ENCODE measurements at regions of chr19 and their contacts with region 1.

Region 1: DNA sequence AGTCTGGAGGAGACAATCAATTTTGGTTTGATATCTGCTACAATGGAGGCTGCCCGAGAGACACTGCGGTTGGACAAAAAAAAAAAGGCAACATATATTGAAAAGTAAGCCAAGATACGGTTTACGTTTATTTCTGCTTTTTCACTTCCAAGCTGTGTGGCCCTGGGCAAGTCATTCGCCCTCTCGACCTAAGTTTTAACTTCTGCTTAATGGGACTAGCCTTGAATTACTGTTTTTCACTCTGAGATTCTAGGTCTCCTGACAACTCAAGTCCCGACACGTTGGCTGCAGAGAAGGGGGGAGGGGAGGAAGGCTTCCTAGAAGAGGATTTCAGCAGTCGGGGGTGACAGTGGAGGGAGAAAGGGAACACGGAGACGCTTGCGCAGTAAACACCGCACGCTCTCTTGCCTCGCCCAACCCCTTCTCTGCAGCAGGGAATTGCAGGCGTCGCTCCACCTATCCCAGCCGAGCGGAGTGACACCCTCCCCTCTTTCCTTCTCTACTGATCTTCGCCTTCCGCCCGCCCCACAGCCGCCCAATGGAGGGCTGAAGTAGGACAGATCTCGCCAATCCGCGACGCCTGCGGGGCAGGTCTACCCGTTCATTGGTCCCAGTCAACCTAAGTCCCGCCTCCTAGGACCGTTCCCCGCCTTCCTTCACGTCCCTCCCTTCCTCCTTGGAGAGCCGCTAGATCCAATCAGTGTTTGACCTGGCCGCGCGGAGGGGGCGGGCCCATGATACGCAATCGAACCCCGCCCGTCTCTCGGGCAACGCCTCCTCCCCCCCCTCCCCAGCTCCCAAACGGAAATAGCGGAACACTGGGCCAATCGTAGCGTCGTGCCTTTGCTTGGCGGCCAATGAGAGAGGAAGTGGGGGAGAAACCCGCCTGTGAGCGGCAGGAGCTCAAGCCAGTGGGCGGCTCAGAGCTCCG is 529 bp upstream of the AP2A1 start:
- DNase-seq: peak; percentile 97 to 100 (median 99)
- ATAC-seq: peak; percentile 87
- H3K4me3 ChIP-seq: peak overlapping the region; percentile 62 to 76
- H3K4me3 Mint-ChIP-seq: peak overlapping the region; percentile 82
- H3K27ac ChIP-seq: peak overlapping the region; percentile 66 to 87
- H3K27ac Mint-ChIP-seq: peak overlapping the region; percentile 93
- H3K4me1 ChIP-seq: peaks cover 24% of the 10 kb centered on the region
- H3K4me1 Mint-ChIP-seq: peaks cover 38% of the 10 kb centered on the region
- H3K27me3 ChIP-seq: no peaks in the 10 kb centered on the region
- H3K27me3 Mint-ChIP-seq: no peaks in the 10 kb centered on the region
- CTCF ChIP-seq: no peak

Region 2: GRCh38 chr19:49590071-49590970 is 176.0 kb before region 1 on chr19:
- CTCF ChIA-PET with region 1: no interaction called
- POLR2A ChIA-PET with region 1: interaction called, 3 read pairs
- intact Hi-C with region 1: loop called in 1 of 2 experiments (anchors 5 kb)
- DNase-seq: peak; percentile 90 to 98 (median 94)
- ATAC-seq: peak; percentile 77
- H3K4me3 ChIP-seq: peak overlapping the region; percentile 78 to 97
- H3K4me3 Mint-ChIP-seq: peak overlapping the region; percentile 91
- H3K27ac ChIP-seq: peak overlapping the region; percentile 82 to 83
- H3K27ac Mint-ChIP-seq: peak overlapping the region; percentile 91
- H3K4me1 ChIP-seq: peaks cover 23% of the 10 kb centered on the region
- H3K4me1 Mint-ChIP-seq: peaks cover 36% of the 10 kb centered on the region
- H3K27me3 ChIP-seq: no peaks in the 10 kb centered on the region
- H3K27me3 Mint-ChIP-seq: no peaks in the 10 kb centered on the region
- CTCF ChIP-seq: peak; percentile 29

Region 3: GRCh38 chr19:49712397-49712859 is 53.8 kb before region 1 on chr19:
- CTCF ChIA-PET with region 1: interaction called, 3 read pairs
- POLR2A ChIA-PET with region 1: interaction called, 14 read pairs
- intact Hi-C with region 1: loop called (anchors 1 kb)
- DNase-seq: no peak
- ATAC-seq: no peak
- H3K4me3 ChIP-seq: no peak overlapping the region
- H3K4me3 Mint-ChIP-seq: no peak overlapping the region
- H3K27ac ChIP-seq: no peak overlapping the region
- H3K27ac Mint-ChIP-seq: no peak overlapping the region
- H3K4me1 ChIP-seq: peaks cover 4% of the 10 kb centered on the region
- H3K4me1 Mint-ChIP-seq: peaks cover 3% of the 10 kb centered on the region
- H3K27me3 ChIP-seq: no peaks in the 10 kb centered on the region
- H3K27me3 Mint-ChIP-seq: peaks cover 3% of the 10 kb centered on the region
- CTCF ChIP-seq: no peak

Region 4: GRCh38 chr19:49850473-49851342 is 84.4 kb after region 1 on chr19 and contains the start of gene PTOV1:
- CTCF ChIA-PET with region 1: no interaction called
- POLR2A ChIA-PET with region 1: interaction called, 4 read pairs
- intact Hi-C with region 1: loop called (anchors 1 kb)
- DNase-seq: peak; percentile 73 to 94 (median 86)
- ATAC-seq: peak; percentile 87
- H3K4me3 ChIP-seq: peak within 1 kb of the TSS; percentile 98 to 99
- H3K4me3 Mint-ChIP-seq: peak within 1 kb of the TSS; percentile 93
- H3K27ac ChIP-seq: peak within 1 kb of the TSS; percentile 96 to 99
- H3K27ac Mint-ChIP-seq: peak within 1 kb of the TSS; percentile 96
- H3K4me1 ChIP-seq: peaks cover 30% of the 10 kb centered on the region
- H3K4me1 Mint-ChIP-seq: peaks cover 35% of the 10 kb centered on the region
- H3K27me3 ChIP-seq: no peaks in the 10 kb centered on the region
- H3K27me3 Mint-ChIP-seq: no peaks in the 10 kb centered on the region
- CTCF ChIP-seq: no peak
- total RNA-seq, gene PTOV1: 112 to 116 TPM

Region 5: GRCh38 chr19:50025024-50025789 is 258.9 kb after region 1 on chr19 and contains the start of gene VRK3:
- CTCF ChIA-PET with region 1: no interaction called
- POLR2A ChIA-PET with region 1: no interaction called
- intact Hi-C with region 1: loop called (anchors 1 to 2 kb)
- DNase-seq: peak; percentile 95 to 100 (median 97)
- ATAC-seq: peak; percentile 86
- H3K4me3 ChIP-seq: peak within 1 kb of the TSS; percentile 88 to 98
- H3K4me3 Mint-ChIP-seq: peak within 1 kb of the TSS; percentile 90
- H3K27ac ChIP-seq: peak within 1 kb of the TSS; percentile 98
- H3K27ac Mint-ChIP-seq: peak within 1 kb of the TSS; percentile 98
- H3K4me1 ChIP-seq: peaks cover 29% of the 10 kb centered on the region
- H3K4me1 Mint-ChIP-seq: peaks cover 53% of the 10 kb centered on the region
- H3K27me3 ChIP-seq: no peaks in the 10 kb centered on the region
- H3K27me3 Mint-ChIP-seq: no peaks in the 10 kb centered on the region
- CTCF ChIP-seq: no peak
- total RNA-seq, gene VRK3: 71.1 to 73.1 TPM